Activated CD4-positive, alpha-beta memory T cell treated with anti-CD3 and anti-CD28 coated beads for 36 hours (primary cell): ENCODE measurements at regions of chr4 and their contacts with region 1.

Region 1: DNA sequence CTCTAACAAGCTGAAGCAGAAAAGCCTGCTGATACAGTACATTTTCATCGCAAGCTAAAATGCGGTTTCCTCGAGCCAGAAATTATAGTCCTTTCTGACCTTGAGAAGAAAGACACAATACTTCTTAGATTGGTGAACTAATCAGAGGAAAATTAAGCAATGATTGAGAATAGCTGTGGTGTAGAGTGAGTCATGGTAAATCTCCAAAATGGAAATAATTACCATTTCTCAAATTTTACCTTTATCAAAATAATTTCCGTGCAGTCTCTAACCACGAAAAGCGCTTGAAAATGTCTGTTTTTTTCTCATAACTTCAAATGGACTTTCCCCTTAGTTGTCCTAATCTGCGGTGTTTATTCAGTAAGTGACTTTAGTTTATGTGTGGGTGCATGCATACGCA is 190.2 kb downstream of the CPE start:
- DNase-seq: no peak
- H3K4me3 Mint-ChIP-seq: no peak overlapping the region
- H3K27ac Mint-ChIP-seq: no peak overlapping the region
- H3K4me1 Mint-ChIP-seq: no peaks in the 10 kb centered on the region
- H3K27me3 Mint-ChIP-seq: peaks cover 3% of the 10 kb centered on the region

Region 2: GRCh38 chr4:165580351-165580905 is 11.4 kb after region 1 on chr4:
- CTCF ChIA-PET with region 1: no interaction called
- POLR2A ChIA-PET with region 1: no interaction called
- intact Hi-C with region 1: loop called (anchors 1 kb)
- DNase-seq: no peak
- H3K4me3 Mint-ChIP-seq: no peak overlapping the region
- H3K27ac Mint-ChIP-seq: no peak overlapping the region
- H3K4me1 Mint-ChIP-seq: no peaks in the 10 kb centered on the region
- H3K27me3 Mint-ChIP-seq: no peaks in the 10 kb centered on the region